Head of caudate nucleus (tissue), 42 donors: ENCODE measurements at regions of chrX and their contacts with region 1.

Region 1: GRCh38 chrX:43559644-43560043 is 96.5 kb upstream of the MAOA start:
- DNase-seq: peak in 38 of 42 donors; percentile 1 to 74 (median 38)

Region 2: GRCh38 chrX:43745938-43746721 is 186.5 kb after region 1 on chrX:
- intact Hi-C with region 1: loop called (anchors 5 kb)
- DNase-seq: no peak

Region 3: GRCh38 chrX:44003975-44004374 is 444.3 kb after region 1 on chrX:
- intact Hi-C with region 1: no loop called
- DNase-seq: no peak